SK-N-SH (cell line): ENCODE measurements at regions of chr1 and their contacts with region 1.

Region 1: DNA sequence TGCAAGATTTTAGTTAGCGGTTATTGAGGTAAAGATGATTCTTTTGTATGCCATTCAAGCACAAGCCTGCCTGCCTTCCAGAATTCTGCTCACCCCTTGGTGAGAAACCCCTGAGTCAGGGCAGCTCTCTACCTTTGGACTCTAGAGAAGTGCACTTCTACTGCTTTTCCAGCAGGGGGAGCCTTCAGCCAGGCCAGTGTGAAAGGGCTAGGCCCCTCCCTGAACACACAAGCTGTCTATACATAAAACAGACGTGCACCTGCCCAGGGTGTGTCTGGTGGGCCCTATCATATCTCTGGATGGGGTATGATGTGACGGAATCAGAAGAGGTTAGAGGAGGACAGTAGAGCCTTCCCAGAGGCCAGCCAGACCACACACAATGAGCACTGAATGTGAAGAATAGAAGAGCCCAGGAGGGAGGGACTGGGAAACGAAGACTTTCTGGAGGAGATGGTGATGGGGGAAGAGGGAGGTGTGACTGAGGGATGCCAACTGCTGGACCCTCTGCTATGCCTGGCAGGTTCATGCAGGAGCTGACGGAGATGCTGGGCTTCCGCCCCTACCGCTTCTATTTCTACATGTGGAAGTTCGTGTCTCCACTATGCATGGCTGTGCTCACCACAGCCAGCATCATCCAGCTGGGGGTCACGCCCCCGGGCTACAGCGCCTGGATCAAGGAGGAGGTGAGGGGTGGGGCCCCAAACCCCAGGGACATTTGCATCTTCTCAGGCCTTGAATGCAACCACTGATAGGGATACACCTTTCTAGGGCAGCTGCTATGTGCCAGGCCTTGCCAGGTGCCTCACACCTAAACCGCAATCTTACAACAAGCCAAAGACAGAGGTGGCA is 13.0 kb upstream of the KCNC4 start:
- DNase-seq: peak; percentile 89
- H3K4me3 ChIP-seq: peak overlapping the region in 1 of 2 experiments; percentile 11; a peak in 1 of 4 replicates
- H3K27ac ChIP-seq: no peak overlapping the region; a peak in 1 of 4 replicates
- H3K4me1 ChIP-seq: peaks cover 0 to 20% of the 10 kb centered on the region in 2 experiments; a peak in 1 of 4 replicates
- H3K27me3 ChIP-seq: no peaks in the 10 kb centered on the region
- CTCF ChIP-seq: peak; percentile 90
- EP300 ChIP-seq: no peak
- RAD21 ChIP-seq: peak; percentile 68

Region 2: DNA sequence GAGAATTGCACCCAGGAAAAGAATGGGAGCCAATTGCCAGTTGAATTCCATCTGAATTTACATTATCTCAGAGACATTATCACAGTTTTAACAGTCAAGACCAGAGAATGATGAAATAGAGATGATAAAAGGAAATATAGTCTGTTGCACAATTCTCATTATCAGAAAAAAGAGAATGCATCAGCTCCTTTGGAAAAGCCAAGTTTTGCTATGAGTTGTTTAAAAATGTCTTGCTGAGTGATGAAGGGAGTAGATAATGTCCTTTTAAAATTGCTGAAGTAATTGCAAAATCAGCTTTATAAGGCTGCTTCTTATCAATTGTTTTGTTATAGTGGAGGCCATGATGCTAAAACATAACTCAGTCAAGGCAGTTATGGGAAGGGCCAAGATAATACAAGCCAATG is 1675.1 kb before region 1 on chr1:
- CTCF ChIA-PET with region 1: no interaction called
- POLR2A ChIA-PET with region 1: no interaction called
- DNase-seq: no peak
- H3K4me3 ChIP-seq: no peak overlapping the region
- H3K27ac ChIP-seq: no peak overlapping the region
- H3K4me1 ChIP-seq: no peaks in the 10 kb centered on the region
- H3K27me3 ChIP-seq: peaks cover 14% of the 10 kb centered on the region; the same call in 1 of the 2 replicates
- CTCF ChIP-seq: no peak
- EP300 ChIP-seq: no peak
- RAD21 ChIP-seq: no peak

Region 3: GRCh38 chr1:110170766-110171733 is 26.1 kb before region 1 on chr1:
- CTCF ChIA-PET with region 1: interaction called, 23 read pairs
- POLR2A ChIA-PET with region 1: no interaction called
- DNase-seq: peak; percentile 88
- H3K4me3 ChIP-seq: no peak overlapping the region
- H3K27ac ChIP-seq: peak overlapping the region in 1 of 2 experiments; percentile 96; a peak in 2 of 4 replicates
- H3K4me1 ChIP-seq: peaks cover 0 to 72% of the 10 kb centered on the region in 2 experiments; a peak in 2 of 4 replicates
- H3K27me3 ChIP-seq: no peaks in the 10 kb centered on the region
- CTCF ChIP-seq: no peak
- EP300 ChIP-seq: peak in 1 of 2 experiments; percentile 95; a peak in 2 of 4 replicates
- RAD21 ChIP-seq: peak; percentile 17

Region 4: GRCh38 chr1:110176299-110176956 is 20.7 kb before region 1 on chr1:
- CTCF ChIA-PET with region 1: interaction called, 23 read pairs
- POLR2A ChIA-PET with region 1: no interaction called
- DNase-seq: peak; percentile 86
- H3K4me3 ChIP-seq: no peak overlapping the region
- H3K27ac ChIP-seq: peak overlapping the region in 1 of 2 experiments; percentile 92; a peak in 2 of 4 replicates
- H3K4me1 ChIP-seq: peaks cover 0 to 62% of the 10 kb centered on the region in 2 experiments; a peak in 2 of 4 replicates
- H3K27me3 ChIP-seq: no peaks in the 10 kb centered on the region
- CTCF ChIP-seq: no peak
- EP300 ChIP-seq: peak in 1 of 2 experiments; percentile 90; a peak in 2 of 4 replicates
- RAD21 ChIP-seq: no peak; the same call in 1 of the 2 replicates

Region 5: GRCh38 chr1:110338886-110339406 is 141.8 kb after region 1 on chr1 and contains the start of gene RBM15:
- CTCF ChIA-PET with region 1: interaction called, 33 read pairs
- POLR2A ChIA-PET with region 1: no interaction called
- DNase-seq: peak; percentile 94
- H3K4me3 ChIP-seq: peak within 1 kb of the TSS; percentile 94 to 99
- H3K27ac ChIP-seq: peak within 1 kb of the TSS; percentile 98 to 99
- H3K4me1 ChIP-seq: peaks cover 29 to 44% of the 10 kb centered on the region in 2 experiments
- H3K27me3 ChIP-seq: no peaks in the 10 kb centered on the region
- CTCF ChIP-seq: no peak
- EP300 ChIP-seq: no peak; a peak in 1 of 4 replicates
- RAD21 ChIP-seq: no peak
- polyA plus RNA-seq, gene RBM15: 3.8 and 4.7 TPM in 2 replicates